CD4-positive, alpha-beta memory T cell (primary cell): ENCODE measurements at regions of chr11 and their contacts with region 1.

Region 1: DNA sequence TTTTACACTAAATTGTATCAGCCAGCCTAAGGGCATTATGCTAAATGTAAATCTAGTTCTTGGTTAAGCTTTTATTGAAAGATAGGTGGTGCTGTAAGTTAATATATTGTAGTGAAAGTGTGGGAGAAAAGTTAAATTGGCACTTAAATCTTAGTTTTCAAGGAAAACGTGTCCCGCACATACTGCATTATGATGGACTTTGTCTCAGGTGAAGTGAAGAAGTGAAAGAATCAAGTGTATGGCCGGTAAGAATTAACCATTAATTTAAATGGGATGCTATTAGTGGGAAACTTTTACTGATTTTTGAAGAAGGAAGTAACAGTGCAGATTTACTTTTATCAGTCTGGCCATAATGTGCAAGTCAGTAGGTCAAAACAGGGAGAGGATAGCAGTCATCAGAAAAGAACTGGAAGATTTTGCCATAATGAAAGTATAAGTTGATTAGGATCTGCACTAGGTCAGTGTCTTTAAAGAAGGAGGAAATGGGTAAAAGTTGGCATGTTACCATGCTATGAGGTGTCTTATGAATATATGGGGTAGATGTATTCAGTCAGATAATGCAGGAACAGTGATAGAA is 81.6 kb downstream of the PDHX start:
- DNase-seq: peak in 4 of 5 donors; percentile 37 to 48 (median 44)
- H3K4me3 ChIP-seq: no peak overlapping the region
- H3K4me3 Mint-ChIP-seq: peak overlapping the region in 6 of 8 donors; percentile 62 to 78 (median 75)
- H3K27ac ChIP-seq: peak overlapping the region; percentile 45
- H3K27ac Mint-ChIP-seq: peak overlapping the region; percentile 57 to 95 (median 86)
- H3K4me1 ChIP-seq: peaks cover 24% of the 10 kb centered on the region
- H3K4me1 Mint-ChIP-seq: peaks cover 20 to 34% (median 24%) of the 10 kb centered on the region in 4 donors
- H3K27me3 ChIP-seq: no peaks in the 10 kb centered on the region
- H3K27me3 Mint-ChIP-seq: no peaks in the 10 kb centered on the region

Region 2: GRCh38 chr11:34585735-34586487 is 412.1 kb before region 1 on chr11:
- CTCF ChIA-PET with region 1: no interaction called
- POLR2A ChIA-PET with region 1: no interaction called
- intact Hi-C with region 1: loop called (anchors 2 kb)
- DNase-seq: peak in 4 of 5 donors; percentile 19 to 39 (median 38)
- H3K4me3 ChIP-seq: no peak overlapping the region
- H3K4me3 Mint-ChIP-seq: no peak overlapping the region
- H3K27ac ChIP-seq: no peak overlapping the region
- H3K27ac Mint-ChIP-seq: no peak overlapping the region
- H3K4me1 ChIP-seq: no peaks in the 10 kb centered on the region
- H3K4me1 Mint-ChIP-seq: peaks cover 0 to 3% (median 0%) of the 10 kb centered on the region in 4 donors
- H3K27me3 ChIP-seq: no peaks in the 10 kb centered on the region
- H3K27me3 Mint-ChIP-seq: peaks cover 3 to 6% of the 10 kb centered on the region in 2 donors

Region 3: DNA sequence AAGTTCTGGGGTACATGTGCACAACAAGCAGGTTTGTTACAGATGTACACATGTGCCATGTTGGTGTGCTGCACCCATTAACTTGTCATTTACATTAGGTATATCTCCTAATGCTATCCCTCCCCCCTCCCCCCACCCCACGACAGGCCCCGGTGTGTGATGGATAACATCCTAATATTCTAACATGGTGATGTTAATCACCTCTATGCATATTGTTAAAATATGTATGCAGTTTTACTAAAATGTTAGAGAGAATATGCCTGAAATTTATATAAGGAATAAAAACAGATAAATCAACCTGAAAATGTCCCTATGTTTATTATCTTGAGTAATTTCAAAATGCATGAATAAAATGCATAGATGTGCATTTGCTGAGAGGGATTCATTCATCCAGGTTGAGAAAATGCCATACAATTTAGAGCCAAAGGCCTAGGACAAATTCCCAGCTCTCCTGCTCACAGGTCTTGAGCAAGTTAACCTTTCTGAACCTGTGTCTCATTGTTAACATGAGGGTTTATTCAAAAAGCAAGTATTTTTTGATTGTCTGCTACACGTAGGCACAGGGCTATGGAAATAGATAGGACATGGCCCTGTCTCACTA is 120.6 kb before region 1 on chr11:
- CTCF ChIA-PET with region 1: no interaction called
- POLR2A ChIA-PET with region 1: no interaction called
- intact Hi-C with region 1: no loop called
- DNase-seq: no peak
- H3K4me3 ChIP-seq: no peak overlapping the region
- H3K4me3 Mint-ChIP-seq: no peak overlapping the region
- H3K27ac ChIP-seq: no peak overlapping the region
- H3K27ac Mint-ChIP-seq: peak overlapping the region in 1 of 7 donors; percentile 87
- H3K4me1 ChIP-seq: no peaks in the 10 kb centered on the region
- H3K4me1 Mint-ChIP-seq: no peaks in the 10 kb centered on the region
- H3K27me3 ChIP-seq: no peaks in the 10 kb centered on the region
- H3K27me3 Mint-ChIP-seq: no peaks in the 10 kb centered on the region

Region 4: GRCh38 chr11:35013514-35014233 is 15.6 kb after region 1 on chr11:
- CTCF ChIA-PET with region 1: interaction called, 5 read pairs
- POLR2A ChIA-PET with region 1: interaction called, 13 read pairs
- intact Hi-C with region 1: no loop called
- DNase-seq: peak; percentile 61 to 87 (median 75)
- H3K4me3 ChIP-seq: no peak overlapping the region
- H3K4me3 Mint-ChIP-seq: peak overlapping the region; percentile 11 to 87 (median 71)
- H3K27ac ChIP-seq: peak overlapping the region; percentile 70
- H3K27ac Mint-ChIP-seq: peak overlapping the region; percentile 93 to 100 (median 97)
- H3K4me1 ChIP-seq: peaks cover 26% of the 10 kb centered on the region
- H3K4me1 Mint-ChIP-seq: peaks cover 23 to 57% (median 37%) of the 10 kb centered on the region in 4 donors
- H3K27me3 ChIP-seq: no peaks in the 10 kb centered on the region
- H3K27me3 Mint-ChIP-seq: no peaks in the 10 kb centered on the region

Region 5: GRCh38 chr11:35144136-35144741 is 146.2 kb after region 1 on chr11:
- CTCF ChIA-PET with region 1: interaction called, 17 read pairs
- POLR2A ChIA-PET with region 1: interaction called, 20 read pairs
- intact Hi-C with region 1: loop called (anchors 1 kb)
- DNase-seq: peak; percentile 67 to 90 (median 76)
- H3K4me3 ChIP-seq: peak overlapping the region; percentile 55 to 59
- H3K4me3 Mint-ChIP-seq: peak overlapping the region; percentile 83 to 99 (median 98)
- H3K27ac ChIP-seq: peak overlapping the region; percentile 73
- H3K27ac Mint-ChIP-seq: peak overlapping the region; percentile 93 to 100 (median 95)
- H3K4me1 ChIP-seq: peaks cover 72% of the 10 kb centered on the region
- H3K4me1 Mint-ChIP-seq: peaks cover 60 to 88% (median 70%) of the 10 kb centered on the region in 4 donors
- H3K27me3 ChIP-seq: no peaks in the 10 kb centered on the region
- H3K27me3 Mint-ChIP-seq: no peaks in the 10 kb centered on the region

Region 6: GRCh38 chr11:35485656-35486322 is 487.7 kb after region 1 on chr11:
- CTCF ChIA-PET with region 1: no interaction called
- POLR2A ChIA-PET with region 1: no interaction called
- intact Hi-C with region 1: loop called (anchors 5 kb)
- DNase-seq: peak; percentile 37 to 58 (median 53)
- H3K4me3 ChIP-seq: no peak overlapping the region
- H3K4me3 Mint-ChIP-seq: no peak overlapping the region
- H3K27ac ChIP-seq: no peak overlapping the region
- H3K27ac Mint-ChIP-seq: peak overlapping the region in 1 of 7 donors; percentile 33
- H3K4me1 ChIP-seq: no peaks in the 10 kb centered on the region
- H3K4me1 Mint-ChIP-seq: no peaks in the 10 kb centered on the region
- H3K27me3 ChIP-seq: peaks cover 15% of the 10 kb centered on the region
- H3K27me3 Mint-ChIP-seq: peaks cover 36 to 43% of the 10 kb centered on the region in 2 donors